ENCODE measurements at regions of chr6 and their contacts with region 1.

Region 1: GRCh38 chr6:15621203-15622044 is 41.4 kb downstream of the DTNBP1 start:
- DNase-seq: peak in 1 of 2 experiments; percentile 5
- H3K4me3 ChIP-seq: no peak overlapping the region
- H3K4me3 Mint-ChIP-seq: no peak overlapping the region
- H3K27ac Mint-ChIP-seq: peak overlapping the region; percentile 21
- H3K4me1 ChIP-seq: no peaks in the 10 kb centered on the region
- H3K4me1 Mint-ChIP-seq: peaks cover 10% of the 10 kb centered on the region
- H3K27me3 ChIP-seq: no peaks in the 10 kb centered on the region
- H3K27me3 Mint-ChIP-seq: no peaks in the 10 kb centered on the region
- CTCF ChIP-seq: no peak

Region 2: GRCh38 chr6:15340775-15341174 is 280.6 kb before region 1 on chr6:
- CTCF ChIA-PET with region 1: no interaction called
- POLR2A ChIA-PET with region 1: no interaction called
- intact Hi-C with region 1: no loop called
- DNase-seq: no peak
- H3K4me3 ChIP-seq: no peak overlapping the region
- H3K4me3 Mint-ChIP-seq: no peak overlapping the region
- H3K27ac Mint-ChIP-seq: no peak overlapping the region
- H3K4me1 ChIP-seq: peaks cover 3% of the 10 kb centered on the region; the same call in 1 of the 2 replicates
- H3K4me1 Mint-ChIP-seq: peaks cover 8% of the 10 kb centered on the region
- H3K27me3 ChIP-seq: no peaks in the 10 kb centered on the region
- H3K27me3 Mint-ChIP-seq: no peaks in the 10 kb centered on the region
- CTCF ChIP-seq: no peak

Region 3: GRCh38 chr6:15491255-15491985 is 130.0 kb before region 1 on chr6:
- CTCF ChIA-PET with region 1: no interaction called
- POLR2A ChIA-PET with region 1: no interaction called
- intact Hi-C with region 1: loop called (anchors 2 kb)
- DNase-seq: peak in 1 of 2 experiments; percentile 66
- H3K4me3 ChIP-seq: no peak overlapping the region
- H3K4me3 Mint-ChIP-seq: no peak overlapping the region
- H3K27ac Mint-ChIP-seq: no peak overlapping the region
- H3K4me1 ChIP-seq: no peaks in the 10 kb centered on the region
- H3K4me1 Mint-ChIP-seq: no peaks in the 10 kb centered on the region
- H3K27me3 ChIP-seq: no peaks in the 10 kb centered on the region
- H3K27me3 Mint-ChIP-seq: no peaks in the 10 kb centered on the region
- CTCF ChIP-seq: peak; percentile 83 to 90

Region 4: GRCh38 chr6:15518057-15518456 is 103.4 kb before region 1 on chr6:
- CTCF ChIA-PET with region 1: no interaction called
- POLR2A ChIA-PET with region 1: no interaction called
- intact Hi-C with region 1: loop called (anchors 5 kb)
- DNase-seq: peak in 1 of 2 experiments; percentile 19
- H3K4me3 ChIP-seq: no peak overlapping the region
- H3K4me3 Mint-ChIP-seq: no peak overlapping the region
- H3K27ac Mint-ChIP-seq: no peak overlapping the region
- H3K4me1 ChIP-seq: no peaks in the 10 kb centered on the region
- H3K4me1 Mint-ChIP-seq: no peaks in the 10 kb centered on the region
- H3K27me3 ChIP-seq: no peaks in the 10 kb centered on the region
- H3K27me3 Mint-ChIP-seq: no peaks in the 10 kb centered on the region
- CTCF ChIP-seq: no peak

Region 5: GRCh38 chr6:15631432-15631831 is 10.0 kb after region 1 on chr6:
- CTCF ChIA-PET with region 1: no interaction called
- POLR2A ChIA-PET with region 1: no interaction called
- intact Hi-C with region 1: no loop called
- DNase-seq: no peak
- H3K4me3 ChIP-seq: no peak overlapping the region
- H3K4me3 Mint-ChIP-seq: no peak overlapping the region
- H3K27ac Mint-ChIP-seq: no peak overlapping the region
- H3K4me1 ChIP-seq: peaks cover 6% of the 10 kb centered on the region; the same call in 1 of the 2 replicates
- H3K4me1 Mint-ChIP-seq: peaks cover 6% of the 10 kb centered on the region
- H3K27me3 ChIP-seq: no peaks in the 10 kb centered on the region
- H3K27me3 Mint-ChIP-seq: no peaks in the 10 kb centered on the region
- CTCF ChIP-seq: no peak

Region 6: GRCh38 chr6:16249971-16250370 is 628.5 kb after region 1 on chr6:
- CTCF ChIA-PET with region 1: no interaction called
- POLR2A ChIA-PET with region 1: no interaction called
- intact Hi-C with region 1: no loop called
- DNase-seq: no peak
- H3K4me3 ChIP-seq: no peak overlapping the region
- H3K4me3 Mint-ChIP-seq: no peak overlapping the region
- H3K27ac Mint-ChIP-seq: no peak overlapping the region
- H3K4me1 ChIP-seq: no peaks in the 10 kb centered on the region
- H3K4me1 Mint-ChIP-seq: no peaks in the 10 kb centered on the region
- H3K27me3 ChIP-seq: no peaks in the 10 kb centered on the region
- H3K27me3 Mint-ChIP-seq: no peaks in the 10 kb centered on the region
- CTCF ChIP-seq: no peak